ENCODE measurements at regions of chr20 and their contacts with region 1.

Region 1: GRCh38 chr20:38645980-38646858 is 44.6 kb downstream of the ARHGAP40 start:
- DNase-seq: peak; percentile 71 to 86
- ATAC-seq: peak; percentile 75 to 93
- H3K4me3 ChIP-seq: peak overlapping the region; percentile 38; the same call in 2 of the 3 replicates
- H3K27ac ChIP-seq: peak overlapping the region; percentile 23 to 78; a peak in 4 of 6 replicates
- H3K4me1 ChIP-seq: 0 out of 3 replicates have a peak, but pooled peaks cover 4% of the 10 kb centered on the region
- CTCF ChIP-seq: peak; percentile 85
- EP300 ChIP-seq: no peak
- POLR2A ChIP-seq: no peak
- RAD21 ChIP-seq: peak; percentile 80 to 90

Region 2: GRCh38 chr20:38633577-38634093 is 12.6 kb before region 1 on chr20:
- CTCF ChIA-PET with region 1: interaction called, 21 read pairs
- POLR2A ChIA-PET with region 1: no interaction called
- DNase-seq: peak; percentile 54 to 82
- ATAC-seq: peak; percentile 90 to 94
- H3K4me3 ChIP-seq: no peak overlapping the region
- H3K27ac ChIP-seq: no peak overlapping the region
- H3K4me1 ChIP-seq: peaks cover 14% of the 10 kb centered on the region; the same call in 1 of the 3 replicates
- CTCF ChIP-seq: peak; percentile 71
- EP300 ChIP-seq: no peak
- POLR2A ChIP-seq: no peak
- RAD21 ChIP-seq: peak; percentile 52 to 55; a peak in 4 of 5 replicates

Region 3: GRCh38 chr20:38674092-38674764 is 28.0 kb after region 1 on chr20:
- CTCF ChIA-PET with region 1: interaction called, 10 read pairs
- POLR2A ChIA-PET with region 1: no interaction called
- DNase-seq: no peak
- ATAC-seq: 0 out of 6 replicates have a peak, but pooled peaks of 1 of the 2 experiments have one; percentile 20
- H3K4me3 ChIP-seq: no peak overlapping the region
- H3K27ac ChIP-seq: no peak overlapping the region
- H3K4me1 ChIP-seq: no peaks in the 10 kb centered on the region
- CTCF ChIP-seq: no peak
- EP300 ChIP-seq: no peak
- POLR2A ChIP-seq: no peak
- RAD21 ChIP-seq: no peak

Region 4: GRCh38 chr20:38748097-38748860 is 102.1 kb after region 1 on chr20 and contains the start of gene ACTR5:
- CTCF ChIA-PET with region 1: interaction called, 253 read pairs
- POLR2A ChIA-PET with region 1: interaction called, 3 read pairs
- DNase-seq: peak; percentile 81 to 90
- ATAC-seq: peak; percentile 94 to 95
- H3K4me3 ChIP-seq: peak within 1 kb of the TSS; percentile 99
- H3K27ac ChIP-seq: peak within 1 kb of the TSS; percentile 96
- H3K4me1 ChIP-seq: peaks cover 11% of the 10 kb centered on the region; the same call in 2 of the 3 replicates
- CTCF ChIP-seq: no peak
- EP300 ChIP-seq: no peak
- POLR2A ChIP-seq: peak; percentile 98
- RAD21 ChIP-seq: no peak
- polyA plus RNA-seq, gene ACTR5: 11.9 and 13.4 TPM in 2 replicates

Region 5: DNA sequence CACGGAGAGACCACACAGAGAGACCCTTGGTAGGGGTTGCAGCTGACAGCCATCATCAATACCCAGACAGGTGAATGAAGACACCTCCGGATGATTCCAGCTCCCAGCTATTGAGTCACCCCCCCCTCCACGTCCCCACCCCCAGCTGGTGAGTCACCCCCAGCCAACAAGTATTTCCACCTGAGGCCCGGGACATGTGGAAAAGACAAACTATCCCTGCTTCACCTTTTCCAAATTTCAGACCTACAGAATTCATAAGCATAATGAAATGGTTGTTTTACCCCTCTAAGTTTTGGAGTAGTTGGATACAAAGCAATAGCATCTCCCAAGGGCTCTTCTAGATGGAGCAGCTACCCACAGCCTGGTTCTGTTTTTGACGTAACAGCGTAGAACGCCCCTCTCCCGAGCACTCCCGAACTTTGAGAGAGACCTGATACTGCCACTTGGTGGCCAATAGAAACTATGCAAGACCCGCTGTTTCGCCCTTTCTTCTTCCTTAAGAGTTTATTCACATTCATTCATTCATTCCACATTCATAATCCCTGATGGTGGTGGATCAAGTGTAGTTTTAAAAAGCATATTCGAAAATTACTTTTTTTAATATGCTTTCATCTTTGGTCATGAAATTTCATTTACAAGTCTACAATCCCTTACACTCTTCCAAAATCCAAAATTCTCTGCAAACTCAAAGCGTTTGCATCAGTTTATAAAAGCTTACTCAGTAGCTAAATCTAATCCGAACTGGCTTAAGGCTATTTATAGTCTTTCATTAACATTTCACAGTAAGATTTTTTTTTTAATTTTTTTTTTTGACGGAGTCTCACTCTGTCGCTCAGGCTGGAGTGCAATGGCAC is 144.2 kb after region 1 on chr20:
- CTCF ChIA-PET with region 1: interaction called, 80 read pairs
- POLR2A ChIA-PET with region 1: no interaction called
- DNase-seq: peak; percentile 46 to 73
- ATAC-seq: peak; percentile 73 to 91
- H3K4me3 ChIP-seq: no peak overlapping the region
- H3K27ac ChIP-seq: peak overlapping the region in 1 of 2 experiments; percentile 35; a peak in 1 of 6 replicates
- H3K4me1 ChIP-seq: peaks cover 4% of the 10 kb centered on the region; the same call in 1 of the 3 replicates
- CTCF ChIP-seq: peak; percentile 81
- EP300 ChIP-seq: no peak
- POLR2A ChIP-seq: no peak
- RAD21 ChIP-seq: peak; percentile 67 to 71